OCI-LY7 (cell line): ENCODE measurements at regions of chr19 and their contacts with region 1.

Region 1: GRCh38 chr19:52942386-52943133 is 19.3 kb upstream of the ZNF888 start:
- DNase-seq: peak; percentile 90
- H3K4me3 ChIP-seq: peak overlapping the region; percentile 97
- H3K27ac ChIP-seq: peak overlapping the region; percentile 50
- H3K4me1 ChIP-seq: peaks cover 8% of the 10 kb centered on the region
- CTCF ChIP-seq: no peak

Region 2: DNA sequence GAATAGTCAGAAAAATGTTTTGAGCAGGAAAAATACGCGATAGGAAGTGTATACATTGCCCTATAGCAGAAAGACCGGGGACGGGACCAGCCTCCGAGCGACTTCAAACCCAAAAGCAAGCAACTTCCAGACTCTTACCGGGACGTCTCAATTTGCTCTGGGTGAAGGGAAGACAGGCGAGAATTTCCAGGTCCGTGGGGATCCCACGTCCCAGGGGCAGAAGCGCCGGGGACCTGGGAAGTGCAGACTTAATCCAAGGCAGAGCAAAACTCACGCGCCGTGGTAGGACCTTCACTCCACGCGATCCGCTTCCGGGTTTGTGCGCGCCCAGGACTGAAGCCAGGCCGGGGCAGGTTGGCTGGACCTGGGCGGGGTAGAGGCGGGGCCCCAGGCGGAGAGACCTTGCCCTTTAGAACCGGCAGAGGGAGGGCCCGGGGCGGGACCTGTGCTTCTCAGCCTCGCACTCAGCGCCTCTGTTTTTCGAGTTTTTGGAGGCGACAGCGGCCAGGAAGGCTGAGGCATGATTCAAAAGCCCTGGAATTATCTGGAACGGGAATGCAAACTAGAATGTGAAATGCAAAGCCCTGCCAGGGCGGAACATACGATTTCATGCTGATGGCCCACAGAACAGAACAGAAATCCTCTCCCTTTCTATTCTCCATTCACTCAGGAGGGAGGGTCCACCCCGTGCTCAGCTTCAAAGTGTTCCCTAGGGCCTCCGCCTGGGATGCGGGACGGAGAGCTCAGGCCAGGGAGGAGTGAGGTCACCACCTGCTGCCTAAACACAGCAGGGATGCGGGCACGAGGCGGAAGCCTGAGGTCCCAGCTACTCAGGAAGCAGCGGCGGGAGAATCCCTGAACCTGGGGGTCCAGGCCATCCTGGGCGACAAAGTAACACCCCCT is 155.9 kb before region 1 on chr19 and contains the start of gene ZNF600:
- CTCF ChIA-PET with region 1: no interaction called
- POLR2A ChIA-PET with region 1: no interaction called
- intact Hi-C with region 1: no loop called
- DNase-seq: peak; percentile 77
- H3K4me3 ChIP-seq: peak within 1 kb of the TSS; percentile 74
- H3K27ac ChIP-seq: no peak within 1 kb of the TSS
- H3K4me1 ChIP-seq: no peaks in the 10 kb centered on the region
- CTCF ChIP-seq: no peak
- total RNA-seq, gene ZNF600: 2.8 and 4.6 TPM in 2 replicates

Region 3: GRCh38 chr19:52962394-52963246 is 20.1 kb after region 1 on chr19 and contains the start of gene ZNF816:
- CTCF ChIA-PET with region 1: no interaction called
- POLR2A ChIA-PET with region 1: no interaction called
- intact Hi-C with region 1: loop called (anchors 1 kb)
- DNase-seq: peak; percentile 97
- H3K4me3 ChIP-seq: peak within 1 kb of the TSS; percentile 81
- H3K27ac ChIP-seq: peak within 1 kb of the TSS; percentile 40
- H3K4me1 ChIP-seq: peaks cover 17% of the 10 kb centered on the region
- CTCF ChIP-seq: no peak
- total RNA-seq, gene ZNF816: 5.8 and 8.8 TPM in 2 replicates

Region 4: GRCh38 chr19:53237114-53237777 is 294.7 kb after region 1 on chr19:
- CTCF ChIA-PET with region 1: no interaction called
- POLR2A ChIA-PET with region 1: no interaction called
- intact Hi-C with region 1: no loop called
- DNase-seq: no peak
- H3K4me3 ChIP-seq: no peak overlapping the region
- H3K27ac ChIP-seq: no peak overlapping the region
- H3K4me1 ChIP-seq: no peaks in the 10 kb centered on the region
- CTCF ChIP-seq: no peak